ENCODE measurements at regions of chr13 and their contacts with region 1.

Region 1: DNA sequence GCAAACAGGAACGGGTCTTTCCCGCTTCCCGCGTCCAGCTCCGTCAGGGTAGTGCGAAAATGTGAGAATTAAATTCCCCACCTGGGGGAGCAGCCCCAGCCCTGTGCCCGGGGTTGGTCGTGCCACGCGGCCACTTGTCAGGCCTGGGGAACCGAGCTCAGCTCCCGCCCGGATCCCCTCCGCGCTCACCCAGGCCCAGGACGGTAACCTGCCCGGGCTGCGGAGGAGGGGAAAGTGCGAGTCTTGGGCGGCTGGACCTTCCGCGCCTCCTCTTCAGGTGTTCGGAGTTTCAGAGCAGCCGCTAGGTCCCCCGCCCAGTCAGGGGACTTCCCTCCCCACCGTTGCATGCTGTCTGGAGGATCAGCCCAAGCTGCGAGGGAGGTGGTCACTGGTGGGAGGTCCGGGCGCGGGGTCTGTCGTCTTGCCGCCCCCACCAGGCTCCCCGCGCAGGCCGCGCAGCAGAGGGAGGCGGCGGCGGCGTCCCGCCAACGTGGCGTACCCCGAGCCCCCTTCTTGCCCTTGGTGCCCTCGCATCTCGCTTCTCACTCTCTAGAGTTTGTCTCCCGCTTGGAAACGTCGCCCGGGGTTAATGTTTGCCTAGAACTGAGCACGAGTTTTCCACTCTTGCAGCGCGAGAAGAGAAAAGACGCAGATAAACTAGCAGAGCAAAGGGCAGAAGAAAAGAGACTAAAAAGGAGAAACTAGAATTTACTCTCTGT is 8.1 kb downstream of the URAD start:
- DNase-seq: no peak
- H3K4me3 ChIP-seq: no peak overlapping the region
- H3K27ac ChIP-seq: no peak overlapping the region
- H3K4me1 ChIP-seq: no peaks in the 10 kb centered on the region
- CTCF ChIP-seq: no peak

Region 2: GRCh38 chr13:27374650-27375049 is 605.8 kb before region 1 on chr13:
- CTCF ChIA-PET with region 1: no interaction called
- POLR2A ChIA-PET with region 1: no interaction called
- intact Hi-C with region 1: loop called (anchors 5 kb)
- DNase-seq: peak; percentile 68
- H3K4me3 ChIP-seq: no peak overlapping the region
- H3K27ac ChIP-seq: no peak overlapping the region
- H3K4me1 ChIP-seq: no peaks in the 10 kb centered on the region
- CTCF ChIP-seq: peak; percentile 91

Region 3: GRCh38 chr13:27868641-27869435 is 111.6 kb before region 1 on chr13:
- CTCF ChIA-PET with region 1: no interaction called
- POLR2A ChIA-PET with region 1: no interaction called
- intact Hi-C with region 1: loop called (anchors 1 kb)
- DNase-seq: peak; percentile 20
- H3K4me3 ChIP-seq: no peak overlapping the region
- H3K27ac ChIP-seq: no peak overlapping the region
- H3K4me1 ChIP-seq: no peaks in the 10 kb centered on the region
- CTCF ChIP-seq: peak; percentile 88

Region 4: DNA sequence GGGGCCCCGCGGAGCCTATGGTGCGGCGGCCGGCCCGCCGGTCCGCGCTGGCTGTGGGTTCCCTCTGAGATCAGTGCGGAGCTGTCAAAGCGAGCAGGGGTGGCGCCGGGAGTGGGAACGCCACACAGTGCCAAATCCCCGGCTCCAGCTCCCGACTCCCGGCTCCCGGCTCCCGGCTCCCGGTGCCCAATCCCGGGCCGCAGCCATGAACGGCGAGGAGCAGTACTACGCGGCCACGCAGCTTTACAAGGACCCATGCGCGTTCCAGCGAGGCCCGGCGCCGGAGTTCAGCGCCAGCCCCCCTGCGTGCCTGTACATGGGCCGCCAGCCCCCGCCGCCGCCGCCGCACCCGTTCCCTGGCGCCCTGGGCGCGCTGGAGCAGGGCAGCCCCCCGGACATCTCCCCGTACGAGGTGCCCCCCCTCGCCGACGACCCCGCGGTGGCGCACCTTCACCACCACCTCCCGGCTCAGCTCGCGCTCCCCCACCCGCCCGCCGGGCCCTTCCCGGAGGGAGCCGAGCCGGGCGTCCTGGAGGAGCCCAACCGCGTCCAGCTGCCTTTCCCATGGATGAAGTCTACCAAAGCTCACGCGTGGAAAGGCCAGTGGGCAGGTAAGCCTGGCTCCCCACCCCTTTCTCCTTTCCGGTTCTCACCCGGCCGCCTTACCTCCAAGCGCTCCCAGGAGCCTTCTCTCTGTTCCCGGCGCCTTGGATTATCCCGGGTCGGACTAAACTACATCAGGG is 60.3 kb before region 1 on chr13 and contains the start of gene PDX1:
- CTCF ChIA-PET with region 1: no interaction called
- POLR2A ChIA-PET with region 1: no interaction called
- intact Hi-C with region 1: no loop called
- DNase-seq: no peak
- H3K4me3 ChIP-seq: no peak within 1 kb of the TSS
- H3K27ac ChIP-seq: no peak within 1 kb of the TSS
- H3K4me1 ChIP-seq: no peaks in the 10 kb centered on the region
- CTCF ChIP-seq: no peak
- total RNA-seq, gene PDX1: not detected in 2 replicates

Region 5: GRCh38 chr13:28273919-28274318 is 293.5 kb after region 1 on chr13:
- CTCF ChIA-PET with region 1: no interaction called
- POLR2A ChIA-PET with region 1: no interaction called
- intact Hi-C with region 1: loop called (anchors 10 kb)
- DNase-seq: peak; percentile 40
- H3K4me3 ChIP-seq: no peak overlapping the region
- H3K27ac ChIP-seq: no peak overlapping the region
- H3K4me1 ChIP-seq: peaks cover 33% of the 10 kb centered on the region
- CTCF ChIP-seq: peak; percentile 66